Sciatic nerve (tissue), 2 donors: ENCODE measurements at regions of chr17 and their contacts with region 1.

Region 1: DNA sequence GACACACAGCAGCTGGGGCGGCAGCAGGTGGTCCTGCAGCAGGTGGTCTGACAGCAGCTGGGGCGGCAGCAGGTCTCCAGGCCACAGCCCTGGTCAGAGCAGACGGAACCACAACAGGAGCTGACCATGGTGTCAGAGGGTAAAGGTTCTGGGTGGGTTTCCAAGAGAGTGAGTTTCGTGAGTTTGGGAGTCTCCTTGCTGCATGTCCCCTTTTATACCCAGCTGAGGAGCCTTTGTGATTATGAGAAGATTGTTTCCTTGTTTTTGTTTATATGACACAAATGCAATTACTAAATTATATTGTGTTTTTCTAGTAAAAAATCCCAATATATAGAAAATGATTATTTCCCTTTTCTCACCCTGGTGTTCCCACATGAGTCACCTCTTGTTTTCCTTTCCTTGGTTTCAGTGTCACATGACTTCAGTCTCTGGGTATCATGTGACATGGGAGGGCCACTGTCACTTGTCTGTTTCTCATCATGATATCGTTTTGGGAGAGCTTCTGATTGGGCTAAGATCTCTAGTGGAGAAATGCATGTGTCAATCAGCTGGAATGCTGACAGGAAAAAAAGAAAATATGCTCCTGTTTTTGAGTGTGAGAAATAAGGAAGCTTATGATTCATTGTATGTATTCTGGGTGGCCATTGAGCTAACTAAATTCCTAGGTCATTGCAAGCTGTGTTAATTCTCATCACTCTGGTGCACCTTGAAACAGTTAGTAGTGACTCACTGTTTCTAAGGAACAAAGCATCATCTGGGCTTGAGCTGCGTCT is at the start of gene KRTAP4-6:
- DNase-seq: no peak
- ATAC-seq: no peak
- total RNA-seq, gene KRTAP4-6: not detected

Region 2: GRCh38 chr17:41251261-41251660 is 110.7 kb after region 1 on chr17:
- intact Hi-C with region 1: loop called (anchors 10 kb)
- DNase-seq: no peak
- ATAC-seq: no peak